ENCODE measurements at regions of chr4 and their contacts with region 1.

Region 1: GRCh38 chr4:99949034-99949998 is 759 bp downstream of the H2AZ1 start:
- DNase-seq: peak; percentile 68 to 92 (median 88)
- H3K4me3 ChIP-seq: peak overlapping the region; percentile 63 to 97 (median 89)
- H3K27ac ChIP-seq: peak overlapping the region; percentile 74 to 98 (median 94)
- H3K27me3 ChIP-seq: no peaks in the 10 kb centered on the region
- CTCF ChIP-seq: peak; percentile 64 to 91 (median 83)

Region 2: GRCh38 chr4:99563310-99564186 is 385.8 kb before region 1 on chr4 and contains the start of gene TRMT10A:
- intact Hi-C with region 1: loop called (anchors 2 kb)
- DNase-seq: peak; percentile 97 to 99 (median 98)
- H3K4me3 ChIP-seq: peak within 1 kb of the TSS; percentile 60 to 96 (median 84)
- H3K27ac ChIP-seq: peak within 1 kb of the TSS; percentile 85 to 99 (median 97)
- H3K27me3 ChIP-seq: peaks cover 0 to 5% (median 0%) of the 10 kb centered on the region in 45 donors
- CTCF ChIP-seq: peak in 38 of 56 donors; percentile 8 to 50 (median 33)
- total RNA-seq, gene TRMT10A: 2.0 to 11.6 (median 5.3) TPM

Region 3: DNA sequence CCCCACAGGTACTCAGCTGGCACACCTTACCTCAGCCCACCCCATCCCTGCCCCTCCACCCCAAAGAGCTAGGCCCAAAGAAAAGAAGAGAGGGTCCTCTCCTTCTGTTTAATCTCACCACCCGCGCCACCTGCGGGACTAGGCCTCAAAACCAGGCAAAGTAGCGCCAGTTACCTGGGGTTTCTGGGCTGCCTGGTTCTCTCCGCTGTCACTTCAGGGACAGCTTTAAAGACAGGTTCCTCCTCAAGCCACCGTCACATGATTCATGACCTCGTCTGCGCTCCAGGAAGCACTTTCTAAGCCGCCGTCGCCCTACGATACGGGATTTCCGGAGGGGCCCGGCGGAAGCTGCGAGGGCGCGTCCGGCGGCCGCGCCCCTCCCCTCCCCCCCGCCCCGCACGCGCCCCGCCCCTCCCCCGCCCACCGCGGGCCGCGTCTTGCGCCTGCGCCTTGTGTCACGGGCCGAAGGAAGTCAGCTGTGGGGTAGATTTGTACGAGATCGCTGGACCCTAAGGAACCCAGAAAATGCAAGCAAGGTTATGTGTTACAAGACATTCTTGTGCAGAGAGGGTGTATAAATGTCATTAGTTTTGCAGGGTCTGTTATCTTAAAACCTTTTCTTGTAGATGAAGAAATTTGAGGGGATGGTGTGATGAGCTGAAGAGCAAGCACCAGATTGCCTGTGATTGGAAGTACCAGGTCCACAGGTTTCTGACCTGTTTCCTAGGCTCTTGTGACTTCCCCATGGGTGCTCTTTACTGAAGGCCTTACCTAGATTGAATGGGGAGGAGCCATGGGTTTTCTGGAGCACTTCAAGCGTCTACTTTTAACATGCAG is 54.9 kb before region 1 on chr4 and contains the start of gene LAMTOR3:
- intact Hi-C with region 1: loop called (anchors 2 kb)
- DNase-seq: peak; percentile 83 to 93 (median 90)
- H3K4me3 ChIP-seq: peak within 1 kb of the TSS; percentile 69 to 97 (median 88)
- H3K27ac ChIP-seq: peak within 1 kb of the TSS in 56 of 59 donors; percentile 13 to 91 (median 79)
- H3K27me3 ChIP-seq: no peaks in the 10 kb centered on the region
- CTCF ChIP-seq: peak in 13 of 56 donors; percentile 12 to 43 (median 22)
- total RNA-seq, gene LAMTOR3: 26.6 to 58.4 (median 43.5) TPM